ENCODE measurements at regions of chr4 and their contacts with region 1.

Region 1: GRCh38 chr4:141563723-141564122 is 72.7 kb upstream of the IL15 start:
- DNase-seq: no peak

Region 2: GRCh38 chr4:141575884-141576283 is 12.2 kb after region 1 on chr4:
- intact Hi-C with region 1: loop called in 1 of 2 experiments (anchors 1 kb)
- DNase-seq: no peak

Region 3: GRCh38 chr4:141587897-141588296 is 24.2 kb after region 1 on chr4:
- intact Hi-C with region 1: no loop called
- DNase-seq: no peak